Right ventricle myocardium inferior (tissue), 1 donor: ENCODE measurements at regions of chr19 and their contacts with region 1.

Region 1: DNA sequence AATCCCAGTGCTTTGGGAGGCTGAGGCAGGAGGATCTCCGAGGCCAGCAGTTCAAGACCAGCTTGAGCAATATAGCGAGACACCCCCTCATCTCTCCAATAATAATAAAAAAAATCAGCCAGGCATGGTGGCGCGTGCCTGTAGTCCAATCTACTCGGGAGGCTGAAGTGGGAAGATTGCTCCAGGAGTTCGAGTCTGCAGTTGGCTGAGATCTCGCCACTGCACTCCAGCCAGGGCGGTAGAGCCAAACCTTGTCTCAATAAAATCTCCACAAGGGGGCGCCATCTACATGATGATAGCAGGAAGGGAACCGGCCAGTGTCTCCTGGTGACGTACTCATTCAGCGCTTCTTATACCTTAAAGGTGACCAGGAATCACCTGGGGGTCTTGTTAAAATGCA is 13.6 kb upstream of the C5AR1 start:
- DNase-seq: no peak
- ATAC-seq: peak; percentile 69

Region 2: GRCh38 chr19:47391510-47392223 is 95.6 kb after region 1 on chr19:
- intact Hi-C with region 1: loop called (anchors 2 kb)
- DNase-seq: peak; percentile 91
- ATAC-seq: peak; percentile 46

Region 3: GRCh38 chr19:47428177-47428894 is 132.3 kb after region 1 on chr19:
- intact Hi-C with region 1: loop called (anchors 10 kb)
- DNase-seq: peak; percentile 87
- ATAC-seq: peak; percentile 88